Activated CD4-positive, alpha-beta memory T cell treated with anti-CD3 and anti-CD28 coated beads for 36 hours (primary cell): ENCODE measurements at regions of chr15 and their contacts with region 1.

Region 1: GRCh38 chr15:41980654-41981323 is 8.4 kb upstream of the EHD4 start:
- DNase-seq: peak; percentile 10
- H3K4me3 Mint-ChIP-seq: no peak overlapping the region
- H3K27ac Mint-ChIP-seq: peak overlapping the region; percentile 30
- H3K4me1 Mint-ChIP-seq: peaks cover 15% of the 10 kb centered on the region
- H3K27me3 Mint-ChIP-seq: no peaks in the 10 kb centered on the region

Region 2: DNA sequence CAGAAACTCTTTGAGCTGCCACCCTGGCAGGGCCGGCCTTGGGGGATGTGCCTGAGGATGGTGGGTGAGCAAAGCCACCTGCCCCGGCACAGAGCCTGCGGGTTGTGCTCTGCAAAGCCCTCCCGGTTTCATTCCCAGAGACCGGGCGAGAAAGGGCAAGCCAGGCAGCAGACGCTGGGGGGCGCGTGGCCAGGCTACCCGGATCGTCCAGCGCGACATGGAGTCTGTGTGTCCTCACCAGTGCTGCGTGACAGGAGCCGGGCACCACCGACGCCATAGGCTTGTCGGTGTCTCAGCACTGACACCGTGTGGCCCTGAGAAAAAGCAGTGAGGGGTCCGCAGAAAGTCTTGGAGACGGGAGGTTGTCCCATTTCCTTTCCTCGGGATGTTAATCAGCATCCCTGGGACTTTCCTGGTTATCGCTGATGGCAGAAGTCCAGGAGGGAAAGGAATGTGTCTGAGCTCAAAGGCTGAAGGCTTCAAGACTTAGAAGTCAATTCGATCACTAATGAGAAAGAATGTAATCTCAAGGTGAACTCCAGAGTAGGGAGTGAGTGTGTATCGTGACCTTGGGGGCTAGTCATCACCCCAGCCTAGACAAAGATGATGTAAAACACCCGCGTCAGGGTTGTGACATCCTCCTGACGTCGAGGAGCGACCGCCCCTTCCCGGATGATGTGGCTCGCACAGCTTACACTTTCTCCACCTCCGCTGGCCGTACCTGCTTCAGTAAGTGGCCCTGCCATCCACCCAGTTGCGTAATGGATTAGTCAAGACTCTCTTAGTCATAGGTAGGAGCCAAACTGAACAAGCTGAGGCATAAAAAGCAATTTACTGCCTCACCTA is 76.4 kb after region 1 on chr15:
- CTCF ChIA-PET with region 1: interaction called, 126 read pairs
- POLR2A ChIA-PET with region 1: no interaction called
- intact Hi-C with region 1: no loop called
- DNase-seq: peak; percentile 81
- H3K4me3 Mint-ChIP-seq: peak overlapping the region; percentile 48
- H3K27ac Mint-ChIP-seq: no peak overlapping the region
- H3K4me1 Mint-ChIP-seq: peaks cover 13% of the 10 kb centered on the region
- H3K27me3 Mint-ChIP-seq: peaks cover 24% of the 10 kb centered on the region